Activated T-helper 2 cell treated with anti-CD3 and anti-CD28 coated beads, Interferon-gamma antibody, Interleukin-2, Interleukin-4, amounts not matched to agents 10 μg/mL and 5 μg/mL and 100 μg/mL, durations not matched to agents 14 hours and 24 hours and 36 hours (primary cell): ENCODE measurements at regions of chr4 and their contacts with region 1.

Region 1: GRCh38 chr4:181528570-181529184 is 714.5 kb upstream of the TENM3 start:
- DNase-seq: no peak
- H3K4me3 Mint-ChIP-seq: no peak overlapping the region
- H3K27ac Mint-ChIP-seq: no peak overlapping the region
- H3K4me1 Mint-ChIP-seq: no peaks in the 10 kb centered on the region
- H3K27me3 Mint-ChIP-seq: no peaks in the 10 kb centered on the region

Region 2: GRCh38 chr4:180664766-180665368 is 863.8 kb before region 1 on chr4:
- intact Hi-C with region 1: loop called (anchors 10 kb)
- DNase-seq: peak; percentile 21
- H3K4me3 Mint-ChIP-seq: no peak overlapping the region
- H3K27ac Mint-ChIP-seq: no peak overlapping the region
- H3K4me1 Mint-ChIP-seq: no peaks in the 10 kb centered on the region
- H3K27me3 Mint-ChIP-seq: no peaks in the 10 kb centered on the region

Region 3: DNA sequence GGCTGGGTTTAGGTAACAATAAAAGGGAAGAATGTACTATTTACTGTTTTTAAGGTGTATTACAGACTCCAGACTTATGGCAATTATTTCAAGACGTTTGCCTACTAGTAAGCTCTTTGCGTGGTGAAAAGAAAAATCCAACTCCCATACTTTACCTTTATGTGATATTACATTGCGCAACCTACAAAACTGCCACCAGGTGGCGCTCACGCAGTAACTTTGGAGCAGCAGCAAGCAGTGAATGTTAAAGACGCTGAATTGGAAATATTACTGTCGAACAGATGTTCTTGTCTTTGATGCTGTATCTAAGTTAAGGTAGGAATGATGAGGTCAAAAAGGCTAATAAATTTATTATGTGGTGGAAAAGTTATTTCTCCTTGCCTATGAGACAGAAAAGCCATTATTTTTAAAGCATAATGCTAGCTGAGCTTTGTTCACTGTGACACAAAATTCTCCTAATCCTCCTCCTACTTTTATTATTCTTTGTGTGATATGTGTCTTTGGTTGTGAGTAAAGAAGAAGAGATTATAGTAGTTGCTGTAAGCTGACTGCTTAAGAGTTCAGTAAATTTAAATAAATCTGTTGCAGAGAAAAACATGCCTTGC is 385.3 kb before region 1 on chr4:
- intact Hi-C with region 1: loop called (anchors 1 kb)
- DNase-seq: peak; percentile 29
- H3K4me3 Mint-ChIP-seq: no peak overlapping the region
- H3K27ac Mint-ChIP-seq: no peak overlapping the region
- H3K4me1 Mint-ChIP-seq: no peaks in the 10 kb centered on the region
- H3K27me3 Mint-ChIP-seq: no peaks in the 10 kb centered on the region